Naive thymus-derived CD4-positive, alpha-beta T cell (primary cell): ENCODE measurements at regions of chr14 and their contacts with region 1.

Region 1: DNA sequence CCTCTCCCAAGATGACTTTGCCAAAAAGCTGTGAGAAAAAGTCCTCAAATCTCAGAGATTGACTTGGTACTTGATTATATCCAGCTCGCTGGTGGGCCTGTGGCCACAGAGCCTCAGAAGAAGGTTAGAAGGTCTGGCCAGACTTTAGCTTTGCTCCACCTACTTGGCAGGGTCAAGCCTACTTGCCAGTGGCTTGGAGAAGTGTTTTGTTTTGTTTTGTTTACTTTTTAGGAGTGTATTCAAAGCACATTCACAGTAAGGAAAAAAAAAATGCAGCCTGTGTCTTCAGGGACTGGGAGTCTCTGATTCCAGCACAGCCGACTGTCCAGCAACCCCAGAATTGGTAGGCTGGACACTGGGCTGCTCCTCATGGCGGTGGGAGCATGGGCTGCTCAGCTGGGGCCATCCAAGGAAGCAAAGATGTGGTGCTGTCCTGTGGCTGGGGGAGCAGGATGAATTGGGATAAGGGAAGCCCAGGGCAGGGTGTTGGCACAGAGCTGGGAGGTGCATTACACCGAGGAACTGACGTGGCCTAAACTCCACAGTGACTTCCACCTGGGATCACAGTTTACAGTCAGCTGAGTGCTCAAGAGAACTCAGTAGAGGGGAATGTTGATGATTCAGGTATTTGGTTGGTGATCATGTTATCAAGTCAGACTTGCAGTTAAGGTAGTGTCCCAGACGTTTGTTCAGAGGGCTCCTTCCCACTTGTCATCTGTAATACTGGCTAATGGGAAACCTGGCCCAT is 73.5 kb downstream of the PPP2R5C start:
- DNase-seq: no peak
- ATAC-seq: no peak
- H3K4me3 ChIP-seq: no peak overlapping the region
- H3K4me3 Mint-ChIP-seq: peak overlapping the region in 5 of 10 donors; percentile 21 to 56 (median 42)
- H3K27ac ChIP-seq: peak overlapping the region; percentile 38
- H3K27ac Mint-ChIP-seq: peak overlapping the region in 8 of 9 donors; percentile 36 to 85 (median 64)
- H3K4me1 ChIP-seq: peaks cover 62 to 92% of the 10 kb centered on the region in 2 donors
- H3K4me1 Mint-ChIP-seq: peaks cover 67 to 97% (median 86%) of the 10 kb centered on the region in 7 donors
- H3K27me3 ChIP-seq: no peaks in the 10 kb centered on the region
- H3K27me3 Mint-ChIP-seq: no peaks in the 10 kb centered on the region

Region 2: DNA sequence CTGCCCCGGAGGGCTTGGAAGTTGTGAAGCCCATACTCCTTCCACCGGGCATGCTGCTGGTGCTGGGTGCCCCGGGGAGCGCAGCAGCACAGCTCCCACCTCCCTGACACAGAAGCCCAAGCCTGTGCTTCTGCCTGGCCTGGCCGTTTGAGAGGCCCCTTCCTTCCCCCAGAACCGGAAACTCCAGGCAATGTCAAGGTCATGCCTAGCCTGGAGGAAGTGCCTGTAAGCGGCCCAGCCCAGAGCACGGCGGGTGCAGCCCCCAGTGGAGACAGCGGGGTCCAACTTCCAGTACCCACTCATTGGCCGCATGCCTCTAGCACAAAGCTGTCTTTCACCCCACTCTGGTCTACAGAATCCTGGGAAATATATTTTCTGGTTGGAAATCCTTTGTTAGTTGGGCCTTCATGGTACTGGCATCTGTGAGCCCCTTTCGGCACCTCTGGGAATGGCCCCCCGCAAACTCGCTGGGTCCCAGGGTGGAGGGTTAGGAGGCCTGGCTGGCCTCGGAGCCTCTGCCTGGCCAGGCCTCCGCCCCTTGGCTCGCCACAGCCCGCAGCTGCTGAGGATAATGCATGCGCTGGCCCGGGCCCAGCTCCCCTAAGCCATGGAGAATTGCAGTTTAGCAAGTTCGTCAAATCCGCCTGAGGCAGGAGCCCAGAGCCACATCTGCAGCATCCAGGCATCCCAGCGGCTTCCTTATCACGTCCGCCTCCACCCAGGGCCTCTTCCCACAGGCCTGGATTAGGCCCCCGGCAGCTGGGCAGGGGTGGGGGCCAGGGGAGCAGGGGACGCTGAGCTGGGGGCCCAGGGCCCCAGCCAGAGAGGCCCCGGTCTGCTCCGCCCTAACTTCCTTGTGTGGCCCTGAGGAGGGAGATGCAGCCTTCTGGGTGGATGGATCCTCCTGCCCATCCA is 1157.2 kb before region 1 on chr14:
- CTCF ChIA-PET with region 1: no interaction called
- POLR2A ChIA-PET with region 1: no interaction called
- intact Hi-C with region 1: no loop called
- DNase-seq: no peak
- ATAC-seq: peak; percentile 67
- H3K4me3 ChIP-seq: no peak overlapping the region
- H3K4me3 Mint-ChIP-seq: no peak overlapping the region
- H3K27ac ChIP-seq: no peak overlapping the region
- H3K27ac Mint-ChIP-seq: no peak overlapping the region
- H3K4me1 ChIP-seq: no peaks in the 10 kb centered on the region
- H3K4me1 Mint-ChIP-seq: peaks cover 0 to 8% (median 5%) of the 10 kb centered on the region in 7 donors
- H3K27me3 ChIP-seq: no peaks in the 10 kb centered on the region
- H3K27me3 Mint-ChIP-seq: peaks cover 16 to 43% (median 20%) of the 10 kb centered on the region in 5 donors

Region 3: DNA sequence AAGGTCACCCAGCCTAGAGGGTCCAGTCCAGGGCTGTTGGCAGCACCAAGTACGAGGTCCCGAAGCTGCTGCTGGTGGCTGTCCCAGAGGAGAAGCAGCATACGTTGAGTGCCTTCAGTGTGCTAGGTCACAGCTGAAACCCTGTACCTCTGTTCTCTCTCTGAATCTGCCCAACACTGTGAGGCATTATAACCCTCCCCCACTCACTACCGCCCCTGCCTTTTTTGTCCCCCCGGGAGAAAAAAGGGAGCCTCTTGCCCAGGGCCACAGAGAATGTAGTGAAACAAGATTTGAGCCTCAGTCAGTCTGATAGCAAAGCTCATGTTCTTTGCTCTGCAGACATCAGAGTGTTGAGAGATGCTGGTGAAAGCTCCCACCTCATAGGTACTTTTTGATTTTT is 20.0 kb before region 1 on chr14:
- CTCF ChIA-PET with region 1: interaction called, 14 read pairs
- POLR2A ChIA-PET with region 1: interaction called, 27 read pairs
- intact Hi-C with region 1: no loop called
- DNase-seq: peak in 1 of 9 donors; percentile 33
- ATAC-seq: no peak
- H3K4me3 ChIP-seq: peak overlapping the region; percentile 92
- H3K4me3 Mint-ChIP-seq: peak overlapping the region; percentile 82 to 98 (median 95)
- H3K27ac ChIP-seq: peak overlapping the region; percentile 99
- H3K27ac Mint-ChIP-seq: peak overlapping the region; percentile 68 to 100 (median 97)
- H3K4me1 ChIP-seq: peaks cover 77 to 78% of the 10 kb centered on the region in 2 donors
- H3K4me1 Mint-ChIP-seq: peaks cover 59 to 92% (median 87%) of the 10 kb centered on the region in 7 donors
- H3K27me3 ChIP-seq: no peaks in the 10 kb centered on the region
- H3K27me3 Mint-ChIP-seq: no peaks in the 10 kb centered on the region

Region 4: DNA sequence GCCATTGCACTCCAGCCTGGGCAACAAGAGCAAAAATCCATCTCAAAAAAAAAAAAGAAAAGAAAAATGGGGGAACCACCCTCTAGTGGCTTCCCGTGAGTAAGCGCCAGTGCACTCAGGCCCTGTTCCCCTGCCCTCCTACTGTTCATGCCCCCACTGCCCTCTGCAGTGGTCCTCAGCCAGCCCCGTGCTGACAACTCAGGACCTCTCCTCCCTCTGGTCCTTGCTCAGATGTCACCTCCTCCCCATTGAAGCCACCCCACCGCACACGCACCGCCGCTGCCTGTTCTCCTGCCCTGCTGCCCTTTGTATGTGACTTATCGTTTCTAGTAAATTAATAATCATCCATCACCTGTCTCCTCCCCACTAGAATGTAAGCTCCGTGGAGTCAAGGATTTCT is 70.6 kb after region 1 on chr14:
- CTCF ChIA-PET with region 1: no interaction called
- POLR2A ChIA-PET with region 1: no interaction called
- intact Hi-C with region 1: no loop called
- DNase-seq: no peak
- ATAC-seq: no peak
- H3K4me3 ChIP-seq: no peak overlapping the region
- H3K4me3 Mint-ChIP-seq: no peak overlapping the region
- H3K27ac ChIP-seq: no peak overlapping the region
- H3K27ac Mint-ChIP-seq: peak overlapping the region in 2 of 9 donors; percentile 21 to 33
- H3K4me1 ChIP-seq: no peaks in the 10 kb centered on the region
- H3K4me1 Mint-ChIP-seq: peaks cover 0 to 2% (median 0%) of the 10 kb centered on the region in 7 donors
- H3K27me3 ChIP-seq: no peaks in the 10 kb centered on the region
- H3K27me3 Mint-ChIP-seq: no peaks in the 10 kb centered on the region